Gastrocnemius medialis (tissue), 4 donors: ENCODE measurements at regions of chr9 and their contacts with region 1.

Region 1: GRCh38 chr9:81558091-81558830 is 131.1 kb downstream of the TLE1 start:
- DNase-seq: no peak
- ATAC-seq: peak in 1 of 2 donors; percentile 11
- H3K4me3 ChIP-seq: no peak overlapping the region
- H3K27ac ChIP-seq: peak overlapping the region; percentile 34 to 53 (median 44)
- H3K4me1 ChIP-seq: peaks cover 8 to 27% of the 10 kb centered on the region in 2 donors
- H3K27me3 ChIP-seq: no peaks in the 10 kb centered on the region
- CTCF ChIP-seq: no peak
- POLR2A ChIP-seq: no peak

Region 2: GRCh38 chr9:81599832-81600231 is 41.6 kb after region 1 on chr9:
- in situ Hi-C with region 1: no loop called
- intact Hi-C with region 1: loop called (anchors 1 kb)
- DNase-seq: no peak
- ATAC-seq: no peak
- H3K4me3 ChIP-seq: no peak overlapping the region
- H3K27ac ChIP-seq: peak overlapping the region; percentile 81 to 93 (median 90)
- H3K4me1 ChIP-seq: peaks cover 62 to 63% of the 10 kb centered on the region in 2 donors
- H3K27me3 ChIP-seq: no peaks in the 10 kb centered on the region
- CTCF ChIP-seq: no peak
- POLR2A ChIP-seq: no peak